ENCODE measurements at regions of chr20 and their contacts with region 1.

Region 1: GRCh38 chr20:51512645-51513044 is 29.9 kb downstream of the NFATC2 start:
- DNase-seq: peak; percentile 54
- H3K4me3 Mint-ChIP-seq: peak overlapping the region; percentile 55
- H3K27ac Mint-ChIP-seq: peak overlapping the region; percentile 90
- H3K4me1 Mint-ChIP-seq: peaks cover 85% of the 10 kb centered on the region
- H3K27me3 Mint-ChIP-seq: no peaks in the 10 kb centered on the region

Region 2: GRCh38 chr20:51500311-51500710 is 12.3 kb before region 1 on chr20:
- CTCF ChIA-PET with region 1: interaction called, 18 read pairs
- POLR2A ChIA-PET with region 1: interaction called, 5 read pairs
- DNase-seq: peak; percentile 72
- H3K4me3 Mint-ChIP-seq: no peak overlapping the region
- H3K27ac Mint-ChIP-seq: peak overlapping the region; percentile 93
- H3K4me1 Mint-ChIP-seq: peaks cover 90% of the 10 kb centered on the region
- H3K27me3 Mint-ChIP-seq: no peaks in the 10 kb centered on the region

Region 3: GRCh38 chr20:51650685-51651134 is 138.1 kb after region 1 on chr20:
- CTCF ChIA-PET with region 1: no interaction called
- POLR2A ChIA-PET with region 1: no interaction called
- DNase-seq: no peak
- H3K4me3 Mint-ChIP-seq: no peak overlapping the region
- H3K27ac Mint-ChIP-seq: no peak overlapping the region
- H3K4me1 Mint-ChIP-seq: peaks cover 2% of the 10 kb centered on the region
- H3K27me3 Mint-ChIP-seq: peaks cover 5% of the 10 kb centered on the region

Measured in activated CD4-positive, alpha-beta T cell treated with anti-CD3 and anti-CD28 coated beads, Interleukin-2, amount 10 ng/mL, durations not matched to agents 7 days and 5 days (primary cell).